Activated T-helper 2 cell treated with anti-CD3 and anti-CD28 coated beads, Interferon-gamma antibody, Interleukin-2, Interleukin-4, amounts not matched to agents 10 μg/mL and 5 μg/mL and 100 μg/mL, durations not matched to agents 14 hours and 24 hours and 36 hours (primary cell): ENCODE measurements at regions of chr4 and their contacts with region 1.

Region 1: GRCh38 chr4:110510955-110511544 is 35.1 kb downstream of the ENPEP start:
- DNase-seq: no peak
- H3K4me3 Mint-ChIP-seq: no peak overlapping the region
- H3K27ac Mint-ChIP-seq: no peak overlapping the region
- H3K4me1 Mint-ChIP-seq: peaks cover 10% of the 10 kb centered on the region
- H3K27me3 Mint-ChIP-seq: peaks cover under 1% of the 10 kb centered on the region

Region 2: DNA sequence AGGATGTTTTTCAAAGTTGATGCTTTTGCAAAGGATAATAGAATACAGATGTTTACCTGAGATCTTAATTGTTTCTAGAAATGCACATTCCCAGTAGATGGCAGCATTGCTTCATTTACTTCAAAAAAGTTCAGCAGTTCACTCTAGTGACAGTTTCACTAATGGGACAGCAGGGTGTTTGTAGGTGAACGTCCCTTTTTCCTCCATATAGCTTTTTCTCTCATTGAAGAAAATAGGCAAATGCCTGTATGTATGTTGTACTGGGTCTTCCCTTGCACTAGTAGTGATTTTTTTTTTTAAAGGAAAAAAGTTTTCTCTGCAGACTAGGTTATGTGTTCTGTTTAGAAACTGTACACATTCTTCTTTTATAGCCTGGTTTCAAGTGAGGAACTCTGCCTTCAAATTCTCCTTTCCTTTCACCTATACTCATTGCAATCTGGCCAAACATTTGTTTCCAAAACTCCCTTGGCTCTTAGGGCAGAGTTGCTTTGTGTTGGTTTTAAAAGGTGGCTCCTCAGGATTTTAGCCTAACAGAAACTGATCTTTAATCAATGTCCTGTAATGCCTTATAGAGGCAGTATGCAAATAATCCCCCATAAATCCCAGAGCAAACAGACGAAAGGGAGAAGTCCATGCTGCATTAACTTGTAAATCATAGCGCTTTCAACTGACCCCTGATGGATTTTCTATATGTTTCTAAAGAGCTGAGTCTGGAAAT is 512.0 kb before region 1 on chr4:
- intact Hi-C with region 1: loop called (anchors 1 kb)
- DNase-seq: no peak
- H3K4me3 Mint-ChIP-seq: no peak overlapping the region
- H3K27ac Mint-ChIP-seq: no peak overlapping the region
- H3K4me1 Mint-ChIP-seq: peaks cover 16% of the 10 kb centered on the region
- H3K27me3 Mint-ChIP-seq: peaks cover 10% of the 10 kb centered on the region

Region 3: DNA sequence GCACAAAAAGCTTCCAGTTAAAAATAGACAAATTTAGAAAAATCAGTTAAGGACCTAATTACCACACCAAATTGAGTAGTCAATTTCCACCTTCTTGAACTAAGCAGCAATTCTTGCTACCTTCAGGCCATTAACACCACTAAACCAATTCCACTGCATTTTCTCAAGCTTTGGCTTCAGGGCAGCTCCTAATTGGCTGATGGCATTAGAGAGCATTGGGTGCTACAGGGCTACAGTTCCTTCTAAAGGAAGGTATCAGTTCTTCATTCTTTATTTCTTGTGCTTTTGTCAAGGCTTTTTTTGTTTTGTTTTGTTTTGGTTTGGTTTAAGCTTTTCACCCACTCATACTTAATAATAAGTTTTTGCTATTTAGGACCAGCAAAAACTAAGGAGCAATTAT is 1544.0 kb after region 1 on chr4:
- intact Hi-C with region 1: no loop called
- DNase-seq: no peak
- H3K4me3 Mint-ChIP-seq: no peak overlapping the region
- H3K27ac Mint-ChIP-seq: no peak overlapping the region
- H3K4me1 Mint-ChIP-seq: peaks cover 3% of the 10 kb centered on the region
- H3K27me3 Mint-ChIP-seq: peaks cover 6% of the 10 kb centered on the region